ENCODE measurements at regions of chr1 and their contacts with region 1.

Region 1: DNA sequence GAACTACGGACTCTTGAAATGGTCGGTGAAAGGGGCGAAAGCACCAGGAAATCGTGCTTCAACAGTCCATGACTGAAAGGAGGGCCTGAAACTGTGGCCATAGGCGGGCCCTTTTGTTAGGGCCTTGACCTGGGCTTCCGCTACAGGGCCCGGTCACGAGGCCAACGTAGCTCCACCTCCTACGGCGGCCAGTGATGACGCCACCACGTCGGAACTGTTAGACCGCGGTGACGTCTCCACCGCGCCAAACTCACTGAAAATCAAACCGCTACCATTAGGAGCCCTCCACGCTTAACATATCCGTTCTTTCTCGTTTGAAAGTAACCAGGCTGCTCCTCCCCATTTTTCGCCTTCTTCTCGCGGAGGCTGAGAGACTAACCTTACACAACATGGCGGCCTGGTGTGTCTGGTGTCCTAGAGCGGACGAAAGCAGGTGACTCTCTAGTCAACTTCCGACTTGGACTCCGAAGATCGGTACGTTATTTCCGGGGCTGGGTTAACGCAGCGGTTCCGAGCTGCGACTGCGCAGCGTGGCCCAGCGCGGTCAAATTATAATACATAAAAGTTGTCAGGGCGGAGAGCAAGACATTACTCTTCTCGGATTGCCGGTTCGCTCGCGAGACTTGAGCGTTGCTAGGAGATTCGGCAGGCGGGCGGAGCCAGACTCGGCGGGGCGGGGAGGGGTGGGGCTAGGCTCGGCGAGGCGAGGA is 376 bp upstream of the CACYBP start:
- DNase-seq: peak; percentile 95 to 99 (median 97)
- ATAC-seq: peak; percentile 75
- H3K4me3 ChIP-seq: peak overlapping the region; percentile 70
- H3K4me3 Mint-ChIP-seq: no peak overlapping the region
- H3K27ac ChIP-seq: peak overlapping the region; percentile 96 to 100
- H3K27ac Mint-ChIP-seq: no peak overlapping the region
- H3K4me1 ChIP-seq: peaks cover 23% of the 10 kb centered on the region
- H3K4me1 Mint-ChIP-seq: peaks cover 46% of the 10 kb centered on the region
- H3K27me3 ChIP-seq: no peaks in the 10 kb centered on the region
- H3K27me3 Mint-ChIP-seq: no peaks in the 10 kb centered on the region
- CTCF ChIP-seq: no peak

Region 2: DNA sequence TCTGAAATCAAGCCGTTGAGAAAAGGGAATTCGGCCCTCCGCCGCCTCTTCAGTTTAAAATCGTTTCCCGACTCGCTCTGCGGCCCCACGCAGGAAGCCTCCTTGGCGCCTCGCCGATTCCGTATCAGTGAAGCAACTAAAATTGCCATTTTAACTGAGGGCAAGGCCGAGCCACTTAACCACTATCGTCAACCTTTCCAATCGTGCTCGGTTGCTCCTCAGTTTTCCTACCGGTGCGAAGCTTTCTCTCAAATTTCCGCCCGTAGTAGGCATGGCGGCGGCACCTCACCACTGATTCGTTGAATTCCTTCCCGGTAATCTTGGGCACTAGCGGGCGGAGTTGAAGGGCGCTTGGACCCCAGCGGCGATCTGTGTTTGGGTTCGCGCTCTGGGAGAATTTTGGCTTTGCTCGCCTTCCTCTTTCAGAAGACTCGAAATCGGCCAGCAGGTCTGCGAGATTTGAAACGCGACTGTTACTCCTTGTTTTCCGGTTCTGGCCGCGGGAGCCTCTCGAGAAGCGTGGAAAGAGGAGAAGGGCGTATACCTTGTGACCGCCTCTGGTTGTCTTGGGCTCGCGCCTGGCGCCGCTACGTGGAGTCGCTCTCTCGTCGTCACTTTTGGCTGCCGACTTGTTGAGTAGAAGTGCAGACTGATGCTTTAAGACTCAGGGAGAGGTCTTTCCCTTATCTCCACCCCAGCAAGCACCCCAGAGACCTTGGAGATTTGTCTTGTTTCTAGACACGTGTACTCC is 1174.9 kb before region 1 on chr1 and contains the starts of genes CENPL and DARS2:
- CTCF ChIA-PET with region 1: no interaction called
- POLR2A ChIA-PET with region 1: interaction called, 11 read pairs
- intact Hi-C with region 1: no loop called
- DNase-seq: peak; percentile 80 to 97 (median 86)
- ATAC-seq: peak; percentile 87
- H3K4me3 ChIP-seq: peak within 1 kb of the TSS; percentile 94
- H3K4me3 Mint-ChIP-seq: peak within 1 kb of the TSS; percentile 96
- H3K27ac ChIP-seq: peak within 1 kb of the TSS; percentile 77 to 92
- H3K27ac Mint-ChIP-seq: peak within 1 kb of the TSS; percentile 89
- H3K4me1 ChIP-seq: peaks cover 26% of the 10 kb centered on the region
- H3K4me1 Mint-ChIP-seq: peaks cover 45% of the 10 kb centered on the region
- H3K27me3 ChIP-seq: no peaks in the 10 kb centered on the region
- H3K27me3 Mint-ChIP-seq: no peaks in the 10 kb centered on the region
- CTCF ChIP-seq: no peak
- total RNA-seq, gene CENPL: 3.8 to 4.7 TPM
- total RNA-seq, gene DARS2: 1.7 TPM

Region 3: DNA sequence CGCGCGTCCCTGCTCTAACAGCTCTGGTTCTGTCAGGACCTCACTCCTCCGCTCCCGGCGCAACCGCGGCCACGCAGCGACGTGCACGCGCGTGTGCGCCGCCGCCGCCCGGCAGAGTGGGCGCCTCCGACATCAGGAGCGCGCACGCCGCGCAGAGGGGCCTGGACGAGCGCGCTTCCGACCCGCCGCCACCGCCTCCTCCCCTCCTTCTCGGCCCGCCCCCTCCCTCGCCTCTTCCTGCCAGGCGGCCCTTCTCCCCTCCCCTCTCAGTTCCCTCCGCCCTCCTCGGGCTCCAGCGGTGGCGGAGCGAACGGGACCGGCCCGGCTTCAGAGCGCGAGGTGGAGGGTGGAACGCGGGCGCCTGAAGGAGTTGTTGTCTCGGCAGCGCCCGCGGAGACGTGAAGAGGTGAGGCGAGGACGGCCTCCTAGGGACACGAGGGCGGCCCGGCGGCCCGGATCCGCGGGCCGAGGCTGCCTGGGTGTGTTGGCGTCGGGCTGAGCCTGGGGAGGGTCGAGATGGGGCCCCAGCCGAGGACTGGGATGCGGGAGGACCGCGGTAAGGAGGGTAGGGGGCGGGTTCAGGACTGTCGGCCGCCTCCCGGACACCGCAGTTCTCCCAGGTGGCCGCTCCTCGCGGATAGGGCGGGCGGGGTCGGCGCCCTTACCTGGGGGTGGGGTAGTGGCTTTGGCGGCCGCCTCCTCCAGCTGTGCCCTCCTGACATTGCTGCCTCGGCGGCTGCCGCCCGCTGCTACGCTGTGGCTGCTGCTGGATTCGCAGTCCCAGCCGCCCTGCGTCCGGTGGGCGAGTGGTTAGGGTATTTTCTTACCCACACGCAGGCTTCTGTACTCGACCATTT is 839.9 kb before region 1 on chr1 and contains the start of gene RABGAP1L:
- CTCF ChIA-PET with region 1: no interaction called
- POLR2A ChIA-PET with region 1: interaction called, 3 read pairs
- intact Hi-C with region 1: loop called in 1 of 2 experiments (anchors 5 kb)
- DNase-seq: peak; percentile 88 to 99 (median 94)
- ATAC-seq: peak; percentile 90
- H3K4me3 ChIP-seq: peak within 1 kb of the TSS; percentile 73
- H3K4me3 Mint-ChIP-seq: peak within 1 kb of the TSS; percentile 96
- H3K27ac ChIP-seq: peak within 1 kb of the TSS; percentile 85 to 95
- H3K27ac Mint-ChIP-seq: peak within 1 kb of the TSS; percentile 92
- H3K4me1 ChIP-seq: peaks cover 20% of the 10 kb centered on the region
- H3K4me1 Mint-ChIP-seq: peaks cover 58% of the 10 kb centered on the region
- H3K27me3 ChIP-seq: no peaks in the 10 kb centered on the region
- H3K27me3 Mint-ChIP-seq: no peaks in the 10 kb centered on the region
- CTCF ChIP-seq: no peak
- total RNA-seq, gene RABGAP1L: 59.8 to 67.6 TPM

Region 4: GRCh38 chr1:174800216-174800851 is 199.0 kb before region 1 on chr1:
- CTCF ChIA-PET with region 1: interaction called, 7 read pairs
- POLR2A ChIA-PET with region 1: interaction called, 85 read pairs
- intact Hi-C with region 1: no loop called
- DNase-seq: peak in 9 of 14 experiments; percentile 4 to 48 (median 10)
- ATAC-seq: no peak
- H3K4me3 ChIP-seq: peak overlapping the region; percentile 79
- H3K4me3 Mint-ChIP-seq: no peak overlapping the region
- H3K27ac ChIP-seq: peak overlapping the region; percentile 34 to 57
- H3K27ac Mint-ChIP-seq: no peak overlapping the region
- H3K4me1 ChIP-seq: peaks cover 12% of the 10 kb centered on the region
- H3K4me1 Mint-ChIP-seq: no peaks in the 10 kb centered on the region
- H3K27me3 ChIP-seq: no peaks in the 10 kb centered on the region
- H3K27me3 Mint-ChIP-seq: no peaks in the 10 kb centered on the region
- CTCF ChIP-seq: no peak

Region 5: DNA sequence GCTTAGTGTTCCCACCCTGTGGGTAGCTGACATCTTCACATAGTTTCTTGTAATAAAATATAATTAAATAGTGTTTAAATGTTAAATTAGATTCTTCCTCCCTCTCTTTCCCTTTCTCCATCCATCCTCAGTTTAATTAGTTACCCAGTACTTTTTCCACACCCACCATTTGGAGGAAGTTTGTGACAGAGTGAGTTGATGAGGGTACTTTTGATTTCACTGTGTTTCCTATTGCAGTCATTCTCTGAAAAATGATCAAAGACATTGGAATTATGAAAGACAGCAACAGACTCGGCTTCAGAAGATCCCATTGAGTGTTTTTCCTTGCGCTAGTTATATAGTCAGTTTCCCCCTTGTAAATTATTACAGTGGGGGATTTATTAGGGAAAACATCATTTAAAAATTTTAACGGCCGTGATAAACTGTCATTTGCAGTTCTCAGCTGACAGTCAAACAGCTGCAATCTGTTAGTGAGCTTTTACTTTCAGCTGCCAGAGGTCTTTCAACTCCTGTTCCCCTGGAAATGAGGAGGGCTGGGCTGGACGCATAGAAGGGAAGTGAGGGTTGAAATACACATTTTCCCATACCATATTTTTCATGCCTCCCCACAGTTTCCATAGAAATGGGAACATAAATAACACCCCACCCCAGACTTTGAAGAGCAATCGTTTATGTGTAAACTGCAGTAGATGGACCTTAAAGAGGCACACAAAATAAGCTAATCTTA is 60.9 kb before region 1 on chr1:
- CTCF ChIA-PET with region 1: no interaction called
- POLR2A ChIA-PET with region 1: interaction called, 11 read pairs
- intact Hi-C with region 1: no loop called
- DNase-seq: peak in 1 of 14 experiments; percentile 21
- ATAC-seq: peak; percentile 24
- H3K4me3 ChIP-seq: no peak overlapping the region
- H3K4me3 Mint-ChIP-seq: peak overlapping the region; percentile 5
- H3K27ac ChIP-seq: no peak overlapping the region
- H3K27ac Mint-ChIP-seq: peak overlapping the region; percentile 50
- H3K4me1 ChIP-seq: no peaks in the 10 kb centered on the region
- H3K4me1 Mint-ChIP-seq: peaks cover 30% of the 10 kb centered on the region
- H3K27me3 ChIP-seq: no peaks in the 10 kb centered on the region
- H3K27me3 Mint-ChIP-seq: no peaks in the 10 kb centered on the region
- CTCF ChIP-seq: no peak

Region 6: DNA sequence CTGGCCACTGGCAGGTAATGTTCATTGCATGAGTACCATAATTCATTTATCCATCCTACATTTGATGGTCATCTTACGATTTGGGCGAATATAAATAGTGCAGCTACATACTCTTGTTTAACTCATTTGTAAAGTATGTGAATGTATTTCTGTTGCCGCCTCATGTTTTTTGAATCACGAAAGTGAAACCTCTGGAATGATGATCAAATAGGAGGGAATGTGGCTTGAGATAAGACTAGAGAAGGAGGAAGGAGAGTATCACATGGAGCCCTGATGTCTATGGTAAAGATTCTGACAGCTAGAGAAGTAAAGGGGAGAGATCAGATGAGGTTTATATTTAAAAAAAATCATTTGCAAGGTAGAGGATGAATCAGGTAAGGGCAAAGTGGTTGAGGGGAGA is 15.9 kb after region 1 on chr1:
- CTCF ChIA-PET with region 1: interaction called, 30 read pairs
- POLR2A ChIA-PET with region 1: interaction called, 268 read pairs
- intact Hi-C with region 1: no loop called
- DNase-seq: no peak
- ATAC-seq: no peak
- H3K4me3 ChIP-seq: no peak overlapping the region
- H3K4me3 Mint-ChIP-seq: no peak overlapping the region
- H3K27ac ChIP-seq: no peak overlapping the region
- H3K27ac Mint-ChIP-seq: no peak overlapping the region
- H3K4me1 ChIP-seq: no peaks in the 10 kb centered on the region
- H3K4me1 Mint-ChIP-seq: no peaks in the 10 kb centered on the region
- H3K27me3 ChIP-seq: no peaks in the 10 kb centered on the region
- H3K27me3 Mint-ChIP-seq: no peaks in the 10 kb centered on the region
- CTCF ChIP-seq: no peak

Region 7: DNA sequence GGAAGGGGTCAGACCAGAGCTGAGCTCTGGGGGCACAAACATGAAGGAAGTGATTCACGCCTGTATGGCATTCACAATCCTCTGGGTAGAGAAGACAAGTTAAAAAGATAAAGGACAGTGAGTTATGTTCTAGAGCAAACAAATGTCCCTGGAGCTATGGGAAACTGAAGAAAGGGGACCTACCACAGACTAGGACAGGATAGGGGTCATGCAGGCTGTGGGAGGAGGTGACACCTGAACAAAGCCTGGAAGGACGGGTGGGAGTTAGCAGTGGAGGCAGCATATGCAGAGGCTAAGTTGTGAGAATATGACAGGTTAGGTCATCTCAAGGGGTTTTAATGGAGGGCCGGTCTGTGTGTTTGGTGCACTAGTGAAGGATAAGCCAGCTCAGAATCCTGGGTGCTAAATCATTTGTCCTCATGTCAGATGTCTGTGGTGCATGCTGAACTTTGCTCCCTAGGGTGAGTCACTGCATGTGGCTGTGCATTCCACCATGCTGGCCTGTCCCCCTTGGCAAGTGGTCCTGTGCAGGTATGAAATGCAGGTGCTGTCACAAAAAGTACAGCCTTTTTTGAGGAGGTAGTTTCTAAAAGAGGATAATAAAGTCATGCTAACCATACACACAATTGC is 96.7 kb after region 1 on chr1:
- CTCF ChIA-PET with region 1: no interaction called
- POLR2A ChIA-PET with region 1: no interaction called
- intact Hi-C with region 1: no loop called
- DNase-seq: no peak
- ATAC-seq: no peak
- H3K4me3 ChIP-seq: no peak overlapping the region
- H3K4me3 Mint-ChIP-seq: no peak overlapping the region
- H3K27ac ChIP-seq: no peak overlapping the region
- H3K27ac Mint-ChIP-seq: no peak overlapping the region
- H3K4me1 ChIP-seq: no peaks in the 10 kb centered on the region
- H3K4me1 Mint-ChIP-seq: no peaks in the 10 kb centered on the region
- H3K27me3 ChIP-seq: no peaks in the 10 kb centered on the region
- H3K27me3 Mint-ChIP-seq: no peaks in the 10 kb centered on the region
- CTCF ChIP-seq: no peak

Region 8: DNA sequence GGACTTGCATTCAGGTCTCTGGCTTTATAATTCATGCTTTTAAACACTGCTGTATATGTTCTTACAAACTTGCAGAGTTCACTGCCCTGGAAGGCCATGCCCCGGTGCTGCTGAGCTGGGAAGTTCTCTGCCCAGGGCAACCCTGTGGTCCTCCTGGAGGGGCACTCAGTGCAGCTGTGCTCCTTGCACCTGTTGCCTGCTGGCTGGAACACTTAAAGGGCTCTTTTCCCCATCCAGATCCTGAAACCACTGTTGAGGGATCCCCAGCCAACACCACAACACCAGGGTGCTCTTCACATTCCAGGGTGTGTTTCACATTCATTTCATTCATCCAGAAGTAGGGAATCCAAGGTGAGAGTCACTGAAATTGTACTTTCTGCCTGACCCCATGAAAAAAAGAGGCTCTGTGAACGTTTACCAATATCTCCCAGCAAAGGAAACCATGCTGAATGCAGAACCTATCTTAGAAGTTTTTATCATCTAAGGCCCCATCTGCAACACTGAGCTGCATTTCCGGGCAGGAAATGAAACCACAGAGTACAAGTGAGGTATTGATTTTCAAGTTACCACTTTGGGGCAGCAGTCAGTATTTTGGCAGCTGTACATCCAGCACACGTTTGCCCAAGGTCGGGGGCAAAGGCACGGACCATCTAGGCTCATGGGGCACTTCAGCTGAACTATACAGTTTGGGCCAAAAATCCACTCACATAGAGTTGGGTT is 209.6 kb after region 1 on chr1:
- CTCF ChIA-PET with region 1: no interaction called
- POLR2A ChIA-PET with region 1: interaction called, 10 read pairs
- intact Hi-C with region 1: no loop called
- DNase-seq: peak; percentile 28 to 90 (median 44)
- ATAC-seq: peak; percentile 92
- H3K4me3 ChIP-seq: peak overlapping the region; percentile 25
- H3K4me3 Mint-ChIP-seq: peak overlapping the region; percentile 86
- H3K27ac ChIP-seq: peak overlapping the region; percentile 37 to 56
- H3K27ac Mint-ChIP-seq: peak overlapping the region; percentile 86
- H3K4me1 ChIP-seq: peaks cover 37% of the 10 kb centered on the region
- H3K4me1 Mint-ChIP-seq: peaks cover 86% of the 10 kb centered on the region
- H3K27me3 ChIP-seq: no peaks in the 10 kb centered on the region
- H3K27me3 Mint-ChIP-seq: no peaks in the 10 kb centered on the region
- CTCF ChIP-seq: no peak

Region 9: GRCh38 chr1:175839678-175840669 is 840.6 kb after region 1 on chr1:
- CTCF ChIA-PET with region 1: no interaction called
- POLR2A ChIA-PET with region 1: no interaction called
- intact Hi-C with region 1: no loop called
- DNase-seq: no peak
- ATAC-seq: no peak
- H3K4me3 ChIP-seq: no peak overlapping the region
- H3K4me3 Mint-ChIP-seq: no peak overlapping the region
- H3K27ac ChIP-seq: no peak overlapping the region
- H3K27ac Mint-ChIP-seq: no peak overlapping the region
- H3K4me1 ChIP-seq: no peaks in the 10 kb centered on the region
- H3K4me1 Mint-ChIP-seq: no peaks in the 10 kb centered on the region
- H3K27me3 ChIP-seq: peaks cover 0 to 13% of the 10 kb centered on the region in 2 experiments
- H3K27me3 Mint-ChIP-seq: peaks cover 15% of the 10 kb centered on the region
- CTCF ChIP-seq: no peak

Measured in CD4-positive, alpha-beta T cell (primary cell).